ENCODE measurements at regions of chr13 and their contacts with region 1.

Region 1: DNA sequence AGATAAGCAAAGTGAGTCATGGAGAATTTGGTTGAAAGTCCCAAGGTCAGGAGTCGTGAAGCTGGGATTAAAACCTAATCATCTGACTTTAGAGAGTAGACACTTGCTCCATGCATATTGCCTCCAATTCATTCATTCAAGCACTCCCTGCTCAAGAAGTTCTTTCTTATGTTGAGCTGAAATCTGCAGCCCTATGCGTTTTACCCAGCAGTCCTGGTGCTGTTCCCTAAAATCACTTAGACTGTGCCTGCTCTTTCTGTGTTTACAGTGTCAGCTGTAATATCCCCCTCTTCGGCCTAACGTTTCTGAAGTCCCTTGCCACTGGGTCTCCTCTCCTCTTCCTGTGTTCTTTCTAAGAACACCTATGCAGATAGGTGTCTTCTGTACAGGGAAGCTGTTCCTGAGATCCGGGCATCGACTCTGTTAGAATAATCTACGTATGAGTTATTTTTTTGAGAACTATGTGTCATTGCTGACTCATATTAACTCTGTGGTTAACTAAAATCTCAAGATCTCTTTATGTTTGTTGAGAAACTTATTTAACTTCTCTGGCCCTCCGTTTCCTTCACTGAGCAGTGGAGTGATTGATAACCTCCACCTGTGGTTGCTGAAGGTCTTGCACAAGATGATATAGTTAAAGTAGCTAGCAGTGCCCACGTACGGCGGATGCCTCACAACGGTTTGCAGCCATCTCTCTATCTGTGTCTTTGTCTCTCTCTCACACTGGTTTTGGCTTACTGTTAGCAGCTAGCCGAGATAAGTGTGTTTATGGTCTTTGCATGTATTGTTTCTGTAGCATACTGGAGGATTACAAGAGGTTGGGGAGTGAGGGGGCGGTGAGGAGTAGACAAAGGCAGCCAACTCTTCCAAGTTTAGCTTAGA is 4.7 kb downstream of the ALOX5AP start:
- DNase-seq: no peak

Region 2: DNA sequence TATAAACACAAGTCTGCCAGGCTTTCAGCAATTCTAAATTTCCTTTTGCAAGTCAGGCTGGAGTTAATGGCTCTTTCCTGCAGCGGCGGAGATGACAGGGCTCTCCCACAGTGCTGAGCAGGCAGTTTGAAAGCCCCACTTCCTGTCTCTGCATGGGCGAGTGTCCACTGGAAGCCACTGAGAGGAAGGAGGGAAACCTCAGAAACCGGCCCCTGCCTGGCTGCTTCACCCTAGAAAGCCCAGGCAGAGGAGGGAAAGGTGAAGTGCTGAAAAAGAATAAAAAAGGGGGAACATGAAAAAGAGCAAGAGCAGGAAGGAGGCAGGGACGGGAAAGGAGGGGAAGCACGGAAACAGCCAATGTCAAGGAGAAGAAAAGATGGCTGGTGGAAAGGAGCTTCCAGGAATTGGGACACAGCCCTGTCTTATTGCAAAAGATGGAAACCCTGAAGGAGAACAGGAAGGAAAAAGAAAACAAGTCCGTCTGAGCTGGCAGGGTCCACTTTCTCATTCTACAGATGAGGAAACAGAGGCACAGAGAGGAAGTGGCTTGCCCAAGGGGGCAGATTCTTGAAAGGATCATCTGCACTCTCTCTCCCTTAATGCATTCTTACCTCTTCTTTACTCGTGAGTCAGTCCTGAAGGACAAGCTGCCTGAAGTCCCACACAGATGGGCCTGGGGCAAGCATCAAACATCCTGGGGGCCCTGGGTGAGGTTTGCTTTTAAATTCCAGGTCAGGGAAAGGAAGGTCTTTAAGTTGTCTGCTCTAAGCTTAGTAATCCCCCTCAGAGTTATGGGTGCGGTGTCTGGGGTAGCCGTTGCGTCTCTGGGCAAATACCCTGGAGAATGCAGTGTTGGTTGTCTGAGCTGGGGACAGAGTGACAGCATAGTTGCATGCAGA is 43.5 kb before region 1 on chr13:
- intact Hi-C with region 1: loop called (anchors 5 kb)
- DNase-seq: peak in 3 of 10 donors; percentile 18 to 87 (median 19)

Measured in posterior cingulate gyrus (tissue), 11 donors.